Adrenal gland (tissue), 19 donors: ENCODE measurements at regions of chr3 and their contacts with region 1.

Region 1: DNA sequence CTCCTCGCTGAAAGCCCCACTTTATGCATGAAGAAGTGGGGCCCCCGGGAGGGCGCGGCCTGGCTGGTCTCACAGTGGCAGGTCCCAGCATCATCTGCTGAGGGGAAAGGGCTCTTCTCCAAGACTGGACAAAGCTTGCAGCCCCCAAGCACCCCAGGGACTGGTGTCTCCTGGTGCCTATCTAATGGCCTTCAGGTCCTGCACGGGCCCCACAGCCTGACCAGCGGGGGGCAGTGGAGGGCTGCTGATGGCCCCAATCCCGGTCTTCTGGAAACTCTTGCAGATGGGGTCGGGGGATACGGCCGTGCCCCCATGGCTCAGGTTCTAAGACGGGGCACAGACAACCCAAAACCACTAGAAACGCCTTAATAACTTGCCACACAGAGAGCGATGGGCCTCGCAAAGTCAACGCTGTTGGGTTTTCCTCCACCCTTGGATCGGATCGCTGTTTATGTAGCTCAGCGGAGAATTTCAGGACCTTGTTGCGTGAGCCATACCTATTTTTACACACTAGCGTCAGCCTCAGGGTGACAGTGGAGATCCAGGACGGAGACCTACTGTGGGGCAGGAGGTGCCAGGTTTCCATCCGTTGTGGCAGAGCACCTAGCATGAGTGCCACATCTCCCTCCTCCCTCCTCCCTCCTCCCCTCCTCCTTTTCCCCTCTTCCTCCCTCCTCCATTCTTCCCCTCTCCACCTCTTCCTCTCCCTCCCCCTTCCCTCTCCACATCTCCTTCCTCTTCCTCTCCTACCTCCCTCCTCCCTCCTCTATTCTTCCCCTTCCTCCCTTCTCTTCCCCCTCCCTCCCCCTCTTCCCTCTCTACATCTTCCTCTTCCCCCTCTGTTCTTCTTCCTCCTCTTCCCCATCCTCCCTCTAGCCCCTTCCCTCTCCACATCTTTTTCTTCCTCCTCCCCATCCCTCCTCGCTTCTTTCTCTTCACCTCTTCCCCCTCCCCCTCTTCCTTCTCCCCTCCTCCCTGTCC is 79.3 kb upstream of the ALDH1L1 start:
- DNase-seq: peak; percentile 30 to 74 (median 56)
- H3K4me3 ChIP-seq: no peak overlapping the region
- H3K27ac ChIP-seq: peak overlapping the region in 1 of 5 donors; percentile 34
- H3K4me1 ChIP-seq: no peaks in the 10 kb centered on the region
- H3K27me3 ChIP-seq: no peaks in the 10 kb centered on the region
- CTCF ChIP-seq: peak; percentile 47 to 81 (median 64)
- POLR2A ChIP-seq: no peak

Region 2: GRCh38 chr3:126389112-126389793 is 129.6 kb after region 1 on chr3:
- intact Hi-C with region 1: loop called (anchors 2 to 5 kb)
- DNase-seq: peak; percentile 84 to 98 (median 96)
- H3K4me3 ChIP-seq: peak overlapping the region in 1 of 4 donors; percentile 36
- H3K27ac ChIP-seq: peak overlapping the region in 4 of 5 donors; percentile 43 to 79 (median 72)
- H3K4me1 ChIP-seq: peaks cover 4 to 5% of the 10 kb centered on the region in 2 donors
- H3K27me3 ChIP-seq: no peaks in the 10 kb centered on the region
- CTCF ChIP-seq: peak; percentile 62 to 99 (median 94)
- POLR2A ChIP-seq: peak; percentile 40 to 56

Region 3: DNA sequence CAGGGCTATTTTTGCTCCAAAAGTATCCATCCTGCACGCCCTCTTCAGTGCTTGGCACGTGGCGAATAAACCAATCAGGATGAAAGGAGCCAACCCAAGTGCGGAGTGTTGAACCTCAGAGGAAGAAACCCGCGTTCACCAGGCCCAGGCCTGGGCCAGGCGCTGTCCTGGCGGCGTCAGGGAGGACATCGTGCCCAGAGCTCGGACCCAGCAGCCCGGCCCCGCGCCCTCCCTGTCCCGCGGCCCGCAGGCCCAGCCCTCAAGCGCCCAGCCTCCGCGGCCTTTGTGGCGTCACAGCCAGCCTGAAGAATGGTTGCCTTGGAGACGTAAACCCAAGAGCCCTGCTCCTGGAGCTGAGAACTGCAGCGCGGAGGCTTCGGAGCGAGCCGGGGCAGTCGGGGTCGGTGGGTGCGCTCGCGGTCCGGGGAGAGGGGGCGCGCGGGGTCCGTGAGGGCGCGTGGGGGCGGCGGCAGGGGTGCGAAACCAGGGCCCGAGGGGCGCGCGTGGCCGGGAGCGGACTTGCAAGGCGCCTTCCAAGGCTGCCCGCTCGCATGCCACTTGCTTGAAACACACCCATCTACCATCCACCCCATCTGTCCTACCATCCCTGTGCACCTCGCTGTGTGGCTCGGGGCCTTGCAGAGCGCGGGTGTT is 135.0 kb after region 1 on chr3 and contains the start of gene CFAP100:
- intact Hi-C with region 1: loop called (anchors 2 to 5 kb)
- DNase-seq: peak in 6 of 7 donors; percentile 38 to 74 (median 46)
- H3K4me3 ChIP-seq: no peak within 1 kb of the TSS
- H3K27ac ChIP-seq: no peak within 1 kb of the TSS
- H3K4me1 ChIP-seq: peaks cover 0 to 4% of the 10 kb centered on the region in 2 donors
- H3K27me3 ChIP-seq: peaks cover 7% of the 10 kb centered on the region
- CTCF ChIP-seq: no peak
- POLR2A ChIP-seq: no peak
- total RNA-seq, gene CFAP100: 0.17 TPM in 1 of 9 donors, not detected in the others